ENCODE measurements at regions of chr9 and their contacts with region 1.

Region 1: GRCh38 chr9:136483589-136484152 is 831 bp upstream of the SEC16A start:
- DNase-seq: peak; percentile 94 to 98 (median 98)
- ATAC-seq: peak; percentile 60 to 62
- H3K4me3 ChIP-seq: peak overlapping the region; percentile 4
- H3K27ac ChIP-seq: peak overlapping the region; percentile 84
- H3K4me1 ChIP-seq: peaks cover 4% of the 10 kb centered on the region
- H3K27me3 ChIP-seq: no peaks in the 10 kb centered on the region

Region 2: DNA sequence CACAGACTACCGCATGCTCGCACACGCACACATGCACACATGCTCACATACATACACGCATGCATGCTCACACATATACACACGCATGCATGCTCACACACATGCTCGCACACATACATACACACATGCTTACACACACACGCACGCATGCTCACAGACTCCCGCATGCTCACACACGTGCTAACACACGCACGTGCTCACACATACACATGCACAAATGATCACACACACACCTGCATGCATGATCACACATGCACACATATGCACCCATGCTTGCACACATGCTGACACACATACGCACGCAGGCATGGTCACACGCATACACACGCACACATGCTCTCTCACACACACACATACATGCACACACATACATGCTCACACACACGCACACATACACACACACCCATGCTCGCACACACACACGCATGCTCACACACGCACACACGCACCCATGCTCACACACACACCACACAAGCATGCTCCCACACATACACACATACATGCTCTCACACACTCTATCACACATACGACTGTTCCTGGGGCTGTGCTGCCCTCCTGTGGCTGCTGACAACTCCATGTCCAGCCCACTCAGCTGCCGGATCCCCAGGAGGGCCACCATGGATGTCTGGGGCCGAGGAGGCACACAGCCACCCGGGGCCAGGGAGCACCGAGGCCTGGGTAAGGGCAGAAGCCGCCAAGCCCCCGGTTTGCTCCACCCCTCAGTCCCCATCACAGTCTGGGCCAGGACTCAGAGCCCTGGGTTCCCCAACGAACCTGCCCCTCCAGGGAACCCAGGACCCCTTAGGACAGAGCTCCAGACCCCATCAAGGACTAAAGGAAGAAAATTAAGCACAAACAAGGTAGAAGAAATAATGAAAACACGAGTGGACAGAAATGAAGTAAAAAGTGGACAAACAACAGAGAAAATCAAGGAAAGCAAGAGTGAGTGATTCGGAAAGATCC is 147.6 kb after region 1 on chr9:
- intact Hi-C with region 1: loop called (anchors 2 kb)
- DNase-seq: peak; percentile 84 to 93 (median 92)
- ATAC-seq: peak; percentile 83 to 86
- H3K4me3 ChIP-seq: no peak overlapping the region
- H3K27ac ChIP-seq: no peak overlapping the region
- H3K4me1 ChIP-seq: no peaks in the 10 kb centered on the region
- H3K27me3 ChIP-seq: no peaks in the 10 kb centered on the region

Region 3: DNA sequence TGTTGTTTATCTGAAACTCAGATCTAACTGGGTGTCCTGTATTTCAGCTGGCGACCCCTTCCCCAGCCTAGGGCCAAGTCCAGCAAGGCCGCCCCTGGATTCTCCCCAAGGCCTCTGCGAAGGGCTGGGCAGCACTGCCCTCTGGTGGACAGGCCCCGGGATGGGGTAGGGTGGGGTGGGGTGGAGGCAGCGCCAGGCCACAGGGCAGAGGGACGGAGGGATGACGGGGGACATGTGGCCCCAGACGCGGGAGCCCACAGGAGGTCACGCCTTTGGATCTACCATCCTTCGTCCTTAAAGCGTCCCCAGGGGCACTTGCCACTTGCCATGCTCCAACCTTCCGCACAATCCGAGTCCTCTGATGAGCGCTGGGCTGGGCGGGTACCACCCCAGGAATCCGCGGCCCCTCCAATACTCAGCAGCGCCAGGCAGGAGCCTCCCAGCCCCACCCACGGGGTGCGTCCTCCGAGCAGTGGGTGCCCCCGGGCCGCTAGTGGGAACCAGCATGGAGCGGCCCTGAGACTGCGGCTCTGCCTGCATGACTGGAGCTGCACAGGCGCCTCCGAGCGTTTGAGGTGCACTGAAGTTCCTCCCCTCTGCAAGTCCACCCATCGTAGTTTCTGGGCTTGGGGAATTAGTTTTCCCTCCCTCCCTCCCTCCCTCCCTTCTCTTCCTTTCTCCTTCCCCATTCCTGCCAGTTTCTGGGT is 210.7 kb after region 1 on chr9:
- intact Hi-C with region 1: loop called in 1 of 4 experiments (anchors 5 kb)
- DNase-seq: peak; percentile 69 to 89 (median 85)
- ATAC-seq: peak; percentile 49 to 61
- H3K4me3 ChIP-seq: no peak overlapping the region
- H3K27ac ChIP-seq: no peak overlapping the region
- H3K4me1 ChIP-seq: no peaks in the 10 kb centered on the region
- H3K27me3 ChIP-seq: no peaks in the 10 kb centered on the region

Region 4: GRCh38 chr9:136790927-136791641 is 307.4 kb after region 1 on chr9 and contains the start of gene TMEM141:
- intact Hi-C with region 1: no loop called
- DNase-seq: peak; percentile 100
- ATAC-seq: peak; percentile 96 to 97
- H3K4me3 ChIP-seq: peak within 1 kb of the TSS; percentile 55
- H3K27ac ChIP-seq: peak within 1 kb of the TSS; percentile 85
- H3K4me1 ChIP-seq: peaks cover 3% of the 10 kb centered on the region
- H3K27me3 ChIP-seq: no peaks in the 10 kb centered on the region
- total RNA-seq, gene TMEM141: 73.6 to 115 (median 100) TPM

Measured in right cardiac atrium (tissue), 5 donors.